ENCODE measurements at regions of chr11 and their contacts with region 1.

Region 1: GRCh38 chr11:104090767-104091166 is 54.3 kb downstream of the DDI1 start:
- DNase-seq: no peak
- ATAC-seq: no peak
- H3K4me3 Mint-ChIP-seq: no peak overlapping the region
- H3K27ac Mint-ChIP-seq: no peak overlapping the region
- H3K4me1 Mint-ChIP-seq: no peaks in the 10 kb centered on the region
- H3K27me3 Mint-ChIP-seq: no peaks in the 10 kb centered on the region

Region 2: DNA sequence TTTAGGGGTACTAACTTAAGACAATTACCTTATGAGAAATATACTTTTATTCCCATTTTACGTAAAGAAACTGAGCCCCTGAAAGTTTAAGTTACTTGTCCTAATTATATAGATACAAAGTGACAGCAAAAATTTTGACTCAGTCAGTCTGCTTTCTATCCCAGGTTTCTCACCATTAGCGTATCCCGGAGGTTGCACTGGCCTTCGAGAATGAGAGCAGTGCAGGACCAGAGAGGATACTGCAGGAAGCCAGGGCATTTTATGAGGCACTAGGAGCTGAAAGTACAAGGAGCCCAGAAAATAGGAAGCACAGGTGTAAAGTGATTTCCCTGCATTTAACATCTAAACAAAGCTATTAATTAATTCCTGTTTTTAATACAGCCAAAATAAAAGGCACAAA is 1574.5 kb after region 1 on chr11:
- CTCF ChIA-PET with region 1: no interaction called
- POLR2A ChIA-PET with region 1: no interaction called
- intact Hi-C with region 1: loop called in 1 of 2 experiments (anchors 10 kb)
- DNase-seq: no peak
- ATAC-seq: no peak
- H3K4me3 Mint-ChIP-seq: no peak overlapping the region
- H3K27ac Mint-ChIP-seq: no peak overlapping the region
- H3K4me1 Mint-ChIP-seq: no peaks in the 10 kb centered on the region
- H3K27me3 Mint-ChIP-seq: no peaks in the 10 kb centered on the region